Naive thymus-derived CD4-positive, alpha-beta T cell (primary cell): ENCODE measurements at regions of chr10 and their contacts with region 1.

Region 1: GRCh38 chr10:31490858-31491504 is 172.0 kb downstream of the ZEB1 start:
- DNase-seq: peak in 6 of 9 donors; percentile 30 to 50 (median 36)
- ATAC-seq: peak; percentile 72
- H3K4me3 ChIP-seq: no peak overlapping the region
- H3K4me3 Mint-ChIP-seq: no peak overlapping the region
- H3K27ac ChIP-seq: no peak overlapping the region
- H3K27ac Mint-ChIP-seq: peak overlapping the region in 1 of 9 donors; percentile 1
- H3K4me1 ChIP-seq: no peaks in the 10 kb centered on the region
- H3K4me1 Mint-ChIP-seq: peaks cover 0 to 12% (median 0%) of the 10 kb centered on the region in 7 donors
- H3K27me3 ChIP-seq: no peaks in the 10 kb centered on the region
- H3K27me3 Mint-ChIP-seq: no peaks in the 10 kb centered on the region

Region 2: GRCh38 chr10:31515819-31516402 is 24.9 kb after region 1 on chr10:
- CTCF ChIA-PET with region 1: no interaction called
- POLR2A ChIA-PET with region 1: no interaction called
- intact Hi-C with region 1: loop called in 1 of 2 experiments (anchors 2 kb)
- DNase-seq: no peak
- ATAC-seq: no peak
- H3K4me3 ChIP-seq: no peak overlapping the region
- H3K4me3 Mint-ChIP-seq: no peak overlapping the region
- H3K27ac ChIP-seq: no peak overlapping the region
- H3K27ac Mint-ChIP-seq: no peak overlapping the region
- H3K4me1 ChIP-seq: no peaks in the 10 kb centered on the region
- H3K4me1 Mint-ChIP-seq: peaks cover 0 to 4% (median 0%) of the 10 kb centered on the region in 7 donors
- H3K27me3 ChIP-seq: no peaks in the 10 kb centered on the region
- H3K27me3 Mint-ChIP-seq: no peaks in the 10 kb centered on the region